Ascending aorta (tissue), 2 donors: ENCODE measurements at regions of chr16 and their contacts with region 1.

Region 1: DNA sequence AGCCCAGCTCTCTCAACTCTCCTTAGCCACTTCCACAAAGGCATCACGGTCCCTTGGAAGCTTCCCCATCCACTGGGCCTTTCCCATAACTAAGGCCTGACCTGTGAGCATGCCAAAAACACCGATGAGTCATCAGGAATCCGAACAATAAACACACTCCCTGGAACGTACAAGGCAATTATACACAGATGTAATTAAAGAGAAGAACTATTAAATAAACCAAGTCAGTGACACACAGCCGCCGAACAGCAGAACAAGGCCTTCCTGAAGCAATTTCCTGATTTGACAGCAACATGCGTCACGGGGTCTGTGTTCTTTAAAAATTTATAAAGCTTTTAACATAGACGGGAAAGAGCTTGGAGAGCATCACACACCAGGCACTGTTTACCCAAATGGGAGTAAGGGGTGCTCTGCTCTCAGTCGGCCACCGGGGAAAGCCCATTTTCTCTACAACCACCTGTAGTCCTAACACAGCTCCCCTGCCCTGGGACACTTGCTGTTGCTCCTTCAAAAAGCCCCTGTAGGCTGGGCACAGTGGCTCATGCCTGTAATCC is 29.4 kb downstream of the COG7 start:
- DNase-seq: peak; percentile 38 to 92
- H3K4me3 ChIP-seq: no peak overlapping the region
- H3K27ac ChIP-seq: peak overlapping the region; percentile 84 to 85
- H3K4me1 ChIP-seq: peaks cover 0 to 16% of the 10 kb centered on the region in 2 donors
- H3K27me3 ChIP-seq: no peaks in the 10 kb centered on the region
- CTCF ChIP-seq: no peak

Region 2: GRCh38 chr16:23248261-23249194 is 175.0 kb before region 1 on chr16:
- intact Hi-C with region 1: loop called (anchors 10 kb)
- DNase-seq: peak in 1 of 2 donors; percentile 71
- H3K4me3 ChIP-seq: no peak overlapping the region
- H3K27ac ChIP-seq: peak overlapping the region; percentile 51 to 54
- H3K4me1 ChIP-seq: peaks cover 3 to 21% of the 10 kb centered on the region in 2 donors
- H3K27me3 ChIP-seq: no peaks in the 10 kb centered on the region
- CTCF ChIP-seq: no peak

Region 3: DNA sequence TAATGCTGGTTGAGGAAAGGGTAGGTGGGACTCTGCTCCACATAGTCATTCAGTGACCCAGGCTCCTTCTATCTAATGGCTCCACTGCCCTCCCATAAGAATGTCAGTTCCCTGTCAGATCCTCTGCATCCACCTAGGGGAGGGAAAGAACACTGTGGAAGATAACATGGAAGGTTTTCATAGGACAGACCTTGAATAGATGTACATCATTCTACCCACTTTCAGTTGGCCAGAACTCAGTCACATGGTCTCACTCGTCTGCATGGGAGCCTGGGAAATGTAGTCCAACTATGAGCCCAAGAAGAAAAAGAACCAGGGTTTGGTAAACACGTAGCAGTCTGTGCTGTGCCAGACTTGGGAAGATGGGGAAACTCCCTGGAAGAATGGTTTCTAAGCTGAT is 148.6 kb before region 1 on chr16:
- intact Hi-C with region 1: no loop called
- DNase-seq: no peak
- H3K4me3 ChIP-seq: no peak overlapping the region
- H3K27ac ChIP-seq: no peak overlapping the region
- H3K4me1 ChIP-seq: no peaks in the 10 kb centered on the region
- H3K27me3 ChIP-seq: no peaks in the 10 kb centered on the region
- CTCF ChIP-seq: no peak

Region 4: GRCh38 chr16:23694644-23695373 is 271.2 kb after region 1 on chr16:
- intact Hi-C with region 1: no loop called
- DNase-seq: no peak
- H3K4me3 ChIP-seq: peak overlapping the region in 1 of 2 donors; percentile 30
- H3K27ac ChIP-seq: no peak overlapping the region
- H3K4me1 ChIP-seq: no peaks in the 10 kb centered on the region
- H3K27me3 ChIP-seq: no peaks in the 10 kb centered on the region
- CTCF ChIP-seq: no peak